Panc1 (cell line): ENCODE measurements at regions of chr3 and their contacts with region 1.

Region 1: GRCh38 chr3:12706504-12707253 is 42.8 kb upstream of the RAF1 start:
- DNase-seq: peak; percentile 67
- ATAC-seq: peak; percentile 96
- H3K4me3 ChIP-seq: no peak overlapping the region
- H3K27ac ChIP-seq: no peak overlapping the region
- H3K4me1 ChIP-seq: no peaks in the 10 kb centered on the region
- H3K27me3 ChIP-seq: no peaks in the 10 kb centered on the region
- CTCF ChIP-seq: peak; percentile 89

Region 2: DNA sequence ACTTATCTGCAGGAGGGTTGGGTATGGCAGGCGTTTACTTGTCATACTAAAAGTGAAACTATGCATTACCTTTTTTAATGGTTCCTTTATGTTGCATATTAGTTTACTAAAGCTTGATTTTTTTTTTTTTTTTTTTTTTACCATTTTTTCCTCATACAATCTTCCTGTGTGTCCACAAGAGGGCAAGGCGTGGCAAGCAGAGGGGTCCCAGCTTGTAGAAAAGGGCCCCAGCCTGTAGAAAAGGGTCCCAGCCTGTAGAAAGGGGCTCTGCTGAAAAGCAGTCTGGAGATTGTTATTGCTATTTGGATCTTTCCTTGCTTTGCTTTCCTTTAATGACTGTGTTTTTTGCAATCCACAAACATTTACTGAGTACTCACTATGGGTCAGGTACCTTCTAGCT is 127.9 kb before region 1 on chr3:
- CTCF ChIA-PET with region 1: no interaction called
- POLR2A ChIA-PET with region 1: no interaction called
- in situ Hi-C with region 1: no loop called
- intact Hi-C with region 1: no loop called
- DNase-seq: no peak
- ATAC-seq: no peak
- H3K4me3 ChIP-seq: no peak overlapping the region
- H3K27ac ChIP-seq: no peak overlapping the region
- H3K4me1 ChIP-seq: no peaks in the 10 kb centered on the region
- H3K27me3 ChIP-seq: no peaks in the 10 kb centered on the region
- CTCF ChIP-seq: no peak; the same call in 1 of the 2 replicates

Region 3: DNA sequence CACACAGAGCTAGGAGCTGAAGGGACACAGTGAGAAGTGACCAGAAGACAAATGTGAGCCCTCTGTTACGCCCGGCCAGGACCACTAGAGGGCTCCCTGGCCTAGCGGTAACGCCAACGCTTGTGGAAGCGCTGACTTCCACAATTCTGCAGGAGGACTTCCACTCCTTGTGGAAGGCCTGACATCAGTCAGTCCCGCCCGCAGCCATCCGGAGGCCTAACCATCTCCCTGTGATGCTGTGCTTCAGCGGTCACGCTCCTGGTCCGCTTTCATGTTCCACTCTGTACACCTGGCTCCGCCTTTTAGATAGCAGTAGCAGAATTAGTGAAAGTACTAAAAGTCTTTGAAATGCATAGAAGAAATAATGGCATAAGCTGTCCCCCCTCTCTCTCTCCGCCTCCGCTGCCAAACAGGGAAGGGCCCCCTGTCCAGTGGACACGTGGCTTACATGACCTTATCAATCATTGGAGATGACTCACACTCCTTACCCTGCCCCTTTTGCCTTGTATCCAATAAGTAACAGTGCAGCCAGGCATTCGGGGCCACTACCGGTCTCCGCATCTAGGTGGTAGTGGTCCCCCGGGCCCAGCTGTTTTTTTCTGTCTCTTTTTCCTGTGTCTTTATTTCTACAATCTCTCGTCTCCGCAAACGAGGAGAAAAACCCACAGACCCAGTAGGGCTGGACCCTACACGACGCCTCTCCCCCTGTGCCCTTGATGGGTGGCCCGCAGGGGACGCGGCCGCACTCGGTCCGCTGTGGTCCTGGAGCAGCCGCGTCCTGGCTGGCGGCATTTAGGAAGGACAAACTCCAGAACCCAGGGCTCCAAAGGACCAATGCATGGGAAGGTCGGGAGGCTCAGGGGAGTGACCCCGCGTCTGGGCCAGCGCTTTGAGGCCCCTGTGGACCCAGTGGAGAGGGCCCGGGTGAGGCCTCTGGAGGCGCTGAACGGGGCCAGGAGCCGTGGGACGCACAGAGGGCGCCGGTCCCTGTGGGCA is 161.7 kb after region 1 on chr3:
- CTCF ChIA-PET with region 1: no interaction called
- POLR2A ChIA-PET with region 1: no interaction called
- in situ Hi-C with region 1: no loop called
- intact Hi-C with region 1: no loop called
- DNase-seq: peak; percentile 59
- ATAC-seq: peak; percentile 94
- H3K4me3 ChIP-seq: no peak overlapping the region
- H3K27ac ChIP-seq: no peak overlapping the region
- H3K4me1 ChIP-seq: no peaks in the 10 kb centered on the region
- H3K27me3 ChIP-seq: no peaks in the 10 kb centered on the region
- CTCF ChIP-seq: peak; percentile 90

Region 4: GRCh38 chr3:14113965-14114635 is 1407.4 kb after region 1 on chr3:
- CTCF ChIA-PET with region 1: no interaction called
- POLR2A ChIA-PET with region 1: interaction called, 23 read pairs
- in situ Hi-C with region 1: no loop called
- intact Hi-C with region 1: no loop called
- DNase-seq: no peak
- ATAC-seq: no peak
- H3K4me3 ChIP-seq: no peak overlapping the region
- H3K27ac ChIP-seq: no peak overlapping the region
- H3K4me1 ChIP-seq: no peaks in the 10 kb centered on the region
- H3K27me3 ChIP-seq: no peaks in the 10 kb centered on the region
- CTCF ChIP-seq: 0 out of 2 replicates have a peak, but pooled peaks have one; percentile 18